Endothelial cell of umbilical vein (primary cell): ENCODE measurements at regions of chr21 and their contacts with region 1.

Region 1: DNA sequence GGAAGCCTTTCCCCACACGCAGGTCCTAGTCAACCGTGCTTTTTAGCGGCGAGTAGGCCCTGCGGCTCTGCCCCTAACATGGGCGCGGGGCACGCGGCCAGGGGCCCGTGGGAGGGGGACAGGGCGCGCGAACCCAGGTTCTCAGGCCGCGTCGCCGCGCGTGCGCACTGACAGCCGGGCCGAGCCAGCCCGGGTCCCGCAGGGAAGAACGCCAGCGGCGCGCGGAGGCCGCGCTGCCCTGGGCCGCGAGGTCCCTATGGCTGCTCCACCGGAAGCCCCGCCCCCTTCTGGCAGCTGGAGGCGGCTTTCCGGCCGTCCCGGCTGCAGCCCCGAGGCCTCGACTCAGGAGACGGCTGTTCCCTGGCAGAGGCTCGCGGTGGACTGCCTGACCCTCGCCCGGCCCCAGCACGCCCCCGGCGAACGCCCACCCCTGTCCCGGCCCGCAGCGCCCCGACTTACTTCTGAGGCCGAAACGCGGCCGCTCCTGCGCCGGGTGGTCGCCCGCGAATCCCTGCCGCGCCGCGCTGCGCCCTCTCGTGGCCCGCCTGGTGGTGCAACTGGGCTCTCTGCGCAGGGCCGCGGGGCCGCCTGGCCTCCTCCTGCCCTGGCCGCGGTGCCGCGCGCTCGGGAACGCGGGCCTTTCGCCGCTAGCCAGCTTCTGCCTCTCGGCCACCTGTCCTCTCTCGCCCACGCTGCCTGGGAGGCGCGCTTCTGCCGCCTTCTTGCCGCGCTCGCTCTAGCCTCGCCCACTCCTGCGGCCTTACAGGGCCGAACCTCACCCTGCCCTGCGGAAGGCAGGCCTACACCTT is 16.6 kb upstream of the RIPPLY3 start:
- DNase-seq: peak; percentile 90
- H3K4me3 ChIP-seq: peak overlapping the region in 2 of 3 experiments; percentile 24 to 56
- H3K27ac ChIP-seq: peak overlapping the region; percentile 36
- H3K4me1 ChIP-seq: peaks cover 2% of the 10 kb centered on the region
- H3K27me3 ChIP-seq: no peaks in the 10 kb centered on the region
- CTCF ChIP-seq: peak; percentile 84 to 87
- POLR2A ChIP-seq: peak; percentile 73

Region 2: GRCh38 chr21:36934864-36935420 is 55.0 kb before region 1 on chr21:
- CTCF ChIA-PET with region 1: interaction called, 4 read pairs
- POLR2A ChIA-PET with region 1: no interaction called
- dilution Hi-C with region 1: no loop called
- intact Hi-C with region 1: loop called (anchors 1 kb)
- DNase-seq: no peak
- H3K4me3 ChIP-seq: no peak overlapping the region
- H3K27ac ChIP-seq: no peak overlapping the region
- H3K4me1 ChIP-seq: no peaks in the 10 kb centered on the region
- H3K27me3 ChIP-seq: no peaks in the 10 kb centered on the region
- CTCF ChIP-seq: no peak
- POLR2A ChIP-seq: no peak

Region 3: DNA sequence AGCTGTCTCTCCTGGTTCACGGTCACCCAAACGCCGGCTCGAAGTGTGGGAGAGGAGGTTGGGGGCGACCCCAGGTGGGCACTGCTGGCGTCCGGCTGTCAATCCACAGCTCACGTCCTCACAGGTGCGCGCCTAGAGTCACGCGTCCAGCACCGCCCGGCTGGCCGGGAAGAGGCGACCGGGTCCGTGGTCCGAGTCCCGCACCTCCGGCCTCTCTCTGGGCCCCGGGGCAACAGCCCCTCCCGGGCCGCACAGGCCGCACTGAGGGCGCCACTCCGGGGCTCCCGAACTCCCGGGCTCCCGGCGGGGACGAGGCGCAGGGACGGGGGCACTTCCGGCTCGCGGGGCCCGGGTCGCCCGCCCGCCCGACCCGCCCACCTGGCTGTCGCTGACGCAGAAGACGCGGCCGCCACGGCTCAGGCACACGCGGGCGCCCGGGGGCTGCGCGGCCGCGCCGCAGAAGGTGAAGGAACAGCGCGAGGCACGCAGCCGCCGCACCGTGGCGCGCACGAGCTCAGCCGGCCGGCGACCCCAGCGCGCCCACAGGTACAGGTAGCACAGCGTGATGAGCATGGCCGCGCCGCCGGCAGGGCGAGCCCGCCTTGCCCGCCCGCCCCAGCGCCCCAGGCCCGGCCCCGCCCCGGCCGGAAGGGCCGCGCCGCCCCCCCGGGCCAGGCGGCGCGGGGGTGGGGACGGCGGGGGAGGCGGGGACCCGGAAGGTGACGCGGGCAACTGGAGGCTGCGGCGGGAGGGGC is 23.7 kb before region 1 on chr21 and contains the start of gene HLCS:
- CTCF ChIA-PET with region 1: interaction called, 15 read pairs
- POLR2A ChIA-PET with region 1: interaction called, 4 read pairs
- dilution Hi-C with region 1: no loop called
- intact Hi-C with region 1: no loop called
- DNase-seq: peak; percentile 28
- H3K4me3 ChIP-seq: peak within 1 kb of the TSS; percentile 57 to 64 (median 63)
- H3K27ac ChIP-seq: peak within 1 kb of the TSS; percentile 70
- H3K4me1 ChIP-seq: peaks cover 9% of the 10 kb centered on the region
- H3K27me3 ChIP-seq: no peaks in the 10 kb centered on the region
- CTCF ChIP-seq: peak in 1 of 2 donors; percentile 31
- POLR2A ChIP-seq: peak; percentile 60
- total RNA-seq, gene HLCS: 13.9 and 17.2 TPM in 2 replicates

Region 4: GRCh38 chr21:37000381-37000780 is 10.5 kb after region 1 on chr21:
- CTCF ChIA-PET with region 1: interaction called, 10 read pairs
- POLR2A ChIA-PET with region 1: no interaction called
- dilution Hi-C with region 1: no loop called
- intact Hi-C with region 1: no loop called
- DNase-seq: no peak
- H3K4me3 ChIP-seq: no peak overlapping the region
- H3K27ac ChIP-seq: no peak overlapping the region
- H3K4me1 ChIP-seq: peaks cover 3% of the 10 kb centered on the region
- H3K27me3 ChIP-seq: peaks cover under 1 to 6% of the 10 kb centered on the region in 2 experiments
- CTCF ChIP-seq: no peak
- POLR2A ChIP-seq: no peak

Region 5: DNA sequence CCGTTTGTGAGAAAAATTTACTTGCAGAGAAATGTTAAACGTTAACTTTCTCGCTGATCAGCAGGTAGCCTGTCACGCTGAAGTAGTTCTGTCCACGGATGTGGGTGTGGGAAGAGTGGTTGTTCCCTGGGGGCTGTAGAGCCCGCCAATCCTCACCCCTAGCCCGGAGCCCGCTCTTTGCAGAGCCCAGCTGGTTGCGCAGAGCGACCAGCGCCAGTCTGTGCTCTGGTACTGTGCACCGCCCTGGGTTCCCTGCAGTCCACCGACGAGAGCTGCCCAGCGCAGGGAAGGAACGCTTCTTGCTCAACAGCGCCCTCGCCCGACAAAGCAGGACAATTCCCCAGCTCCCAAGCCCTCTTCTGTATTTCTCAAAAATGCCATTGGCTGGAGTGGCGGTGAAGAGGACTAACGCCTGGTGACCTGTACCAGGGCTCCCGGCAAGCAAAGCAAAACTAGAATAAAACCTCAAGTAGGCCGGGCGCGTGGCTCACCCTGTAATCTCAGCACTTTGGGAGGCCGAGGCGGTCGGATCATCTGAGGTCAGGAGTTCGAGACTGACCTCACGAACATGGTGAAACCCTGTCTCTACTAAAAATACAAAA is 19.9 kb after region 1 on chr21:
- CTCF ChIA-PET with region 1: interaction called, 37 read pairs
- POLR2A ChIA-PET with region 1: no interaction called
- dilution Hi-C with region 1: no loop called
- intact Hi-C with region 1: loop called (anchors 1 kb)
- DNase-seq: peak; percentile 90
- H3K4me3 ChIP-seq: peak overlapping the region in 2 of 3 experiments; percentile 10 to 40
- H3K27ac ChIP-seq: no peak overlapping the region
- H3K4me1 ChIP-seq: peaks cover 8% of the 10 kb centered on the region
- H3K27me3 ChIP-seq: peaks cover 25 to 32% of the 10 kb centered on the region in 2 experiments
- CTCF ChIP-seq: peak; percentile 87 to 94
- POLR2A ChIP-seq: no peak

Region 6: DNA sequence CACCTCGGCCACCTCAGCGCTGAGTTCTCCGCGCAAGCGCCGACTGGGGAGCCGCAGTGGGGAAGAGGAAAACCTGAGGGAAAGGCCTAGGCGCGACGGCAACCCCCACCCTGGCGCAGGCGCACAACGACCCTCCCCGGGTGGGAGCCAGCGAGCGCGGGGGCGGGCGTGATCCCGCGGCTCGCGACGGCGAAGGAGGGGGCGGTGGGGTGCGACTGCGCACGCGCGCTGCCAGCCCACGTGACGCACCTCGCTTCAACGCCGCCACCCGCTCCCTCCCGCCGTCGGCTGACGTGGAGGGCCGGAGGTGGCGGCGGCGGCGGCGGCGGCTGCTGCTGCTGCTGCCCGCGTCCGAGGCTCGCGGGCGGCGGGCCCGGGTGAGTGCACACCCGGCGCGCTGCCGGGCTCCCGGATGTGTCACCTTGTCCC is 83.1 kb after region 1 on chr21 and contains the starts of genes PIGP and TTC3:
- CTCF ChIA-PET with region 1: interaction called, 4 read pairs
- POLR2A ChIA-PET with region 1: no interaction called
- dilution Hi-C with region 1: no loop called
- intact Hi-C with region 1: loop called (anchors 5 kb)
- DNase-seq: peak; percentile 97
- H3K4me3 ChIP-seq: peak within 1 kb of the TSS; percentile 49 to 88 (median 60)
- H3K27ac ChIP-seq: peak within 1 kb of the TSS; percentile 95
- H3K4me1 ChIP-seq: peaks cover 17% of the 10 kb centered on the region
- H3K27me3 ChIP-seq: no peaks in the 10 kb centered on the region
- CTCF ChIP-seq: no peak
- POLR2A ChIP-seq: peak; percentile 73
- total RNA-seq, gene PIGP: 11.4 and 12.5 TPM in 2 replicates
- total RNA-seq, gene TTC3: 104 and 113 TPM in 2 replicates